Prostate gland (tissue), 2 donors: ENCODE measurements at regions of chr14 and their contacts with region 1.

Region 1: DNA sequence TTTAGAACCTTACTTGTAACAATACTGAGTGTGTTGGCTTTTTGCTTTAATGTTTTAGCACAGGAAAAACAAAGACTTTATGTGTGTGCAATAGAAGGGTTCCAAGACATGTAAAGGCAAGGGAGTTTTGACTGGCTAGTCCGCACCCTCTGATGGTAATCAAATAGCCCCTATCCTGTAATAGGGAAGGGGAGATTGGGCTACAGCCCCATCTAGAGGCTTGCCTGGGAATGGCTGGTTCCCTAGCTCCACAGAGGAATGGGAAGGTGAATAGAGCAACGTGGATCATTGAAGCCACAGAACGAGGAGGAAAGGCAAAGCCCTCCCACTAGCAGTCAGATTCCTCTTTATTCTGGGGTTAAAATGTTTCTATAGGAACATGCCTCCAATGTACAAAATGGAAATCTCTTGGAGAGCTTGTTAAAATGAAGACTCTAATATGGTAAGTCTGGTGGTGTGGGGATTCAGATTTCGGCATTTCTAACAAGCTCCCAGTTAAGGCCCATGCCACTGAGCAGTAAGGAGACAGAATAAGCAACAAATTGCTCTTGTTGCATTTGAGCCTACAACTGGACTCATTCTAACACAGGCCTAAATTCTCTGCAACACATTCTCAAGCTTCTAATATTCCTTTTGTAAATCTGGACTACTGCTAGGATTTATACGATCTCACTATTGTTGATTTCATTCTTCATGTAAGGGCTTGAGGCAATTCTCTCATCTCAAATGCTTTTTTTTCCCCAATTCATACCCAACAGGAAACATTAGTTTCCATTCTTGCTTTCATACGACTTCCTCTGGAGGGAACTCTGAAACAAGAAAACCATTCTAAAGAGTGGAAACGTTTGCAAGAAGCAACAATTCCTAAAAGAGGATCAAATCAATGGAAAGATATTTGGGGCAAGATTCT is 57.1 kb downstream of the NIN start:
- DNase-seq: peak; percentile 68
- H3K4me3 ChIP-seq: no peak overlapping the region
- H3K27ac ChIP-seq: peak overlapping the region in 1 of 2 donors; percentile 22
- H3K4me1 ChIP-seq: no peaks in the 10 kb centered on the region
- H3K27me3 ChIP-seq: no peaks in the 10 kb centered on the region
- CTCF ChIP-seq: peak; percentile 78 to 94 (median 88)
- POLR2A ChIP-seq: no peak

Region 2: DNA sequence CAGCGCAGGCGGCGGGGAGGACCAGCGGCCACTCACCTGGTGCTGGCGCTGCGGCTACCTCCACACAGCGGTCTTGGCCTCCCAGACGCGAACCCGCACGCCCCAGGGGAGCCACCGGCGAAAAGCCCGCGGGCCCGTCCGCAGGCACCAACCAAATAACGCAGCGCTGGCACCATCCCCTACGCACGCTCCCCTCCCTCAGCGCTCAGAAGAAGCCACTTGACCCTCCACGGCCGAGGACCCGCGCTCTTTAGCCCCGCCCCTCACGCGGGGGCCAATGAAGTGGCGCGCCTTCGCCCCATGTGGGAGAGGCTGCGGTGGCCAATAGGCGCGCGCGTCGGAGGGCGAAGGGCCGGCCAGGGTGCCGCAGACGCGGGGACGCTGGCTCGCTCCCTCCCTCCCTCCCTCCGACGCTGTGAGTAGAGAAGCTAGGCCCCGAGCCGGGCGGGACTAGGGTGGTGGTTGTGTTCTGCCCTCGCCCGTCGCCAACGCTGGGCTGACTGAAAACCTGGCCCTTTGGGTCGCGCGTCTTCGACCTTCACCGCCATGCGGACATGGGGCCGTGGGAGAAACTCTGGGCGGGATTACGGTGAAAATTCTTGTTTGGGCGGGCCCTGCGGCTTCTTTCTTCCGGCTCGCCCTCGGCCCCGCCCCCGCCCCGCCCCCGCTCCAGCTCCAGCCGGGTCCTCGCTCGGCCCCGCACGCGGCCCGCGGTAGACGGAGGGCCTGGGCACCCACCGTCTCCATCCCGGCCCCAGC is 461.7 kb before region 1 on chr14 and contains the starts of genes DMAC2L and L2HGDH:
- intact Hi-C with region 1: loop called (anchors 10 kb)
- DNase-seq: peak; percentile 91
- H3K4me3 ChIP-seq: peak within 1 kb of the TSS; percentile 55 to 71
- H3K27ac ChIP-seq: peak within 1 kb of the TSS; percentile 93 to 94
- H3K4me1 ChIP-seq: no peaks in the 10 kb centered on the region
- H3K27me3 ChIP-seq: no peaks in the 10 kb centered on the region
- CTCF ChIP-seq: peak in 3 of 4 experiments; percentile 29 to 69 (median 50)
- POLR2A ChIP-seq: peak; percentile 77
- total RNA-seq, gene DMAC2L: 6.9 to 24.5 TPM
- total RNA-seq, gene L2HGDH: 5.6 to 6.5 TPM

Region 3: DNA sequence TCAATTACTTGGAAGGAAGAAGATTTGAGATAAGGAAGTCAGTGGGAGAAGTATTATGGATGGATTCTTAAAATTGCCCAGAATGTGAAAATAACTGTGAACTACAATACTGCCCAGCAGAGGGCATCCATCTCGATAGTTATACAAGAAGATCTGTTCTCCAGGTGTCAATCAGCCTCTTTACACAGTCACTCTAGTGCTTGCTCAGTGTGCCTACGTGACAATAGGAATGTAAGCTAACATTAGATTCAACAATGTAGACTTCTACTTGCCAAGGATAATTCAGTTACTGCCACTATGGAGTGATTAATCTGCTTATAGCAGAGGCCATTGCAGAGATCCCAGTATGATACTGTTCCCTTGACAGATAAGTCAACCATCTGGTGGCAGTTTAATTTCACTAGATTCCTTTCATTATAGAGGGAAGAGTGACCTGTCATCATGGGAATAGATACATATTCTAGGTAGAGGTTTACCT is 230.9 kb before region 1 on chr14:
- intact Hi-C with region 1: loop called (anchors 5 kb)
- DNase-seq: peak; percentile 44
- H3K4me3 ChIP-seq: no peak overlapping the region
- H3K27ac ChIP-seq: no peak overlapping the region
- H3K4me1 ChIP-seq: no peaks in the 10 kb centered on the region
- H3K27me3 ChIP-seq: no peaks in the 10 kb centered on the region
- CTCF ChIP-seq: peak in 3 of 4 experiments; percentile 45 to 68 (median 67)
- POLR2A ChIP-seq: no peak

Region 4: GRCh38 chr14:50573858-50574257 is 200.0 kb before region 1 on chr14:
- intact Hi-C with region 1: no loop called
- DNase-seq: no peak
- H3K4me3 ChIP-seq: no peak overlapping the region
- H3K27ac ChIP-seq: no peak overlapping the region
- H3K4me1 ChIP-seq: no peaks in the 10 kb centered on the region
- H3K27me3 ChIP-seq: no peaks in the 10 kb centered on the region
- CTCF ChIP-seq: no peak
- POLR2A ChIP-seq: no peak

Region 5: DNA sequence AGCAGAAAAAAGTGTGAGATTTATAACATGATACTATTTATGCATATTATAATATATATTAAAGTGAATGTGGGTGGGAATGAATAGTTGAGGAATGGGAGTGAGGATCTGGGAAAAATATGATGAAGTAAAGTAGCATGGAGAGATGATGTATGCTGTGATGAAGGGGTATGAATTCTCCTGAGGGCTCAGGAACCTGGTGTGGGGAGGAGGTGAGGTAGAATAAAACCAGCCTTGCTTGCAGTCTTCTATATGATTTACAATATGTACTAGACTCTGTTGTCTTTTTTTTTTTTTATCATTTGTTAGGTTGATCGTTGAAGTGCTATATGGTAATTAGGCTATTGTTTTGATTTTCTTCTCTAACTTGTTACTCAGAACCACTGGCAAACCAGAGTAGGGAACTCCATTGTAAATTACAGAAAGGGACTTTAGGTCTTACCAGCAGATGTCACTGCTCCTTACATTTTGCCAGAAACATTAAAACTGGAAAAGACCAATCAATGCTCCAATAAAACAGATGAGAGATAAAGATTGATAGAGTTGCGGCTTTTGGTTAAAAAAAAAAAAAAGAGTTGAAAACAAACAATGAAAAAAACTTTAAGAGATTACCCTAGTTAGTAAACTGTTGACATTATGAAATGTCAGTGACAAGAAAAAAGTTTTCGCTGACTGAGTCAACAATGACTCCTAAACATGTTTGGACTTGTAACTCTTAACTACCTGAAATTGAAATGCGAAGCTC is 174.0 kb before region 1 on chr14:
- intact Hi-C with region 1: loop called (anchors 5 kb)
- DNase-seq: no peak
- H3K4me3 ChIP-seq: no peak overlapping the region
- H3K27ac ChIP-seq: peak overlapping the region in 1 of 2 donors; percentile 2
- H3K4me1 ChIP-seq: no peaks in the 10 kb centered on the region
- H3K27me3 ChIP-seq: no peaks in the 10 kb centered on the region
- CTCF ChIP-seq: peak in 3 of 4 experiments; percentile 49 to 76 (median 67)
- POLR2A ChIP-seq: no peak

Region 6: DNA sequence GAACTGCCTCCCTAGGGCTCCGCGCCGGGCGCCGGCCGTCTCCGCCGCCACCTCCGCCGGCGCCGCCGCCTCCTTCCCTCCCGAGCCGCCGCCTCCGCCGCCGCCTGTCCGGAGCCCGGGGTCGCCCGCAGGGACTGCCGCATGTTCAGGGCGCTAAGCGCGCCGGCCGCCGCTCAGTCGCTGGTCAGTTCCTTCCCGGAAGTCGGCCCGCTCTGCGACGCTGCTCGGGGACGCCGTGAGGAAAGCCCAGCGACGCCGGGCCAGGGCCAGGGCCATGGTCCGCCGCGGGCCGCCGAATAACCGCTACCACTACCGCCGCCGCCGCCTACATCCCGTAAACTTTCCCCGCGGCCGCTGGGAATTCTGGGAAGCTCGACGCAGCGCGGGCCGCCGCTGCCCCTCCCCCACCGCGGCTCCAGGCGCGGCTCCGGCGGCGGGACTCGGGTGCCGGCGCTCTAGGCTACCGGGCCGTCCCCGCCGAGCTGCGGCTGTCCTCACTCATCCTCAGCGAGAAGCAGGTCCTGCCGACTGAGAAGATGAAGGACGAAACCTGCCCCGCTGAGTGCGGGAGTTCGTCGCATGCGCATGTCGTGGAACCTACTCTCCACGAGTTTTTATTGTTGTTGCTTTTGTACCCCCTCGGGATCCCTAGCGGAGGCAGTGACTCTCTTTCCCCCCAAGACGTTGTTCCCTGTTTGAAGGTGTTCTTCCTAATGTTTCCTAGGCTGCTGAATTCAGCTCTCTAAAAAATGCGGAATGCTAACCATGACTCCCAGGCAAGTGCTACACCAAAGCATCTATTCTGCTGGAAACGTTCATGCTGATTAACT is 105.7 kb before region 1 on chr14 and contains the start of gene SAV1:
- intact Hi-C with region 1: loop called (anchors 5 kb)
- DNase-seq: peak; percentile 82
- H3K4me3 ChIP-seq: peak within 1 kb of the TSS; percentile 68 to 93
- H3K27ac ChIP-seq: peak within 1 kb of the TSS; percentile 97 to 98
- H3K4me1 ChIP-seq: no peaks in the 10 kb centered on the region
- H3K27me3 ChIP-seq: no peaks in the 10 kb centered on the region
- CTCF ChIP-seq: peak in 1 of 4 experiments; percentile 18
- POLR2A ChIP-seq: peak; percentile 88
- total RNA-seq, gene SAV1: 29.4 to 105 TPM